ENCODE measurements at regions of chr6 and their contacts with region 1.

Region 1: DNA sequence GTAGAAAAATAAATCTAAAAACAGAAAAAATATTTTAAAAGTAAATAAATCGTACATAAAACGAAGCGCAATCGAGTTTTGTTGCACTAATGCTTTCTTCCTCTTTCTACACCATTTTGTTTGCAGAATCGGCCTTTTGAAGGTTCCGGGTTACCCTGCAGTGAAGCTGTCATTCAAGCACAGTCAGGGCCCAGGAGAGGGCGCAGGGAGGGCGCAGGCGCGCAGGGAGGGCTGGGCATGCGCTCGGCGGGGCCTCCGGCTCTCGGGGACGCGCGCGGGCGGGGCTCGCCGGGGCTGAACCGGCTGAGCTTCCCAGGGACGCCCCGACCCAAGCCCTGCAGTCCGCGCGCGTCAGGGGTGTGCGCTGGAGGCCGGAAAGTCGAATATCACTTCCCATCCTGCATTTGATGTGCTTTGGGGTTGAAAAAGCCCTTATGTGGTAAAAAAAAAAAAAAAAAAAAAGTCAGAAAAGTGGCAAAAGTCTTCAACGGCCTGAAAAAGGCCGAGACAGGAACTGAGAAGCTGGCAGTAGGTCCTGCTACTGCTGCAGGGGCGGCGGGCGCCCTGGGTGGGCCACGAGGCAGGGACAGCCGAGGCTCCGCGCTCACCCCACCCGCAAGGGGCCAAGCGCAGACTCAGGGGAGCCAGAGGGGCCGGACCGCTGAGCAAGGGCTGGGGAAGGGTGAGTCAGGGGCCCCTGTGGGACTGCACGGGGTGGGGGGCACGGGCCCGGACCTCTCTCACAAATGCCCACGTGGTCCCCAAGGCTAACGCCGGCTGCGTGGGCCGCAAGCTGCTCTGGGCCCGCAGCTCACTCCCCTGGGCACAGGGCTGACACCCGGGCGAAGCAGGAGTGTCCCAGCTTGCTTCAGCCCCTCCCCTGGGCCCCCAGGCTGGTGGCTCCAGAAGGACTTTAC is 40.5 kb downstream of the THBS2 start:
- DNase-seq: peak; percentile 87
- H3K4me3 Mint-ChIP-seq: peak overlapping the region; percentile 43
- H3K27ac Mint-ChIP-seq: peak overlapping the region; percentile 32
- H3K4me1 Mint-ChIP-seq: peaks cover 7% of the 10 kb centered on the region
- H3K27me3 Mint-ChIP-seq: peaks cover 5% of the 10 kb centered on the region

Region 2: DNA sequence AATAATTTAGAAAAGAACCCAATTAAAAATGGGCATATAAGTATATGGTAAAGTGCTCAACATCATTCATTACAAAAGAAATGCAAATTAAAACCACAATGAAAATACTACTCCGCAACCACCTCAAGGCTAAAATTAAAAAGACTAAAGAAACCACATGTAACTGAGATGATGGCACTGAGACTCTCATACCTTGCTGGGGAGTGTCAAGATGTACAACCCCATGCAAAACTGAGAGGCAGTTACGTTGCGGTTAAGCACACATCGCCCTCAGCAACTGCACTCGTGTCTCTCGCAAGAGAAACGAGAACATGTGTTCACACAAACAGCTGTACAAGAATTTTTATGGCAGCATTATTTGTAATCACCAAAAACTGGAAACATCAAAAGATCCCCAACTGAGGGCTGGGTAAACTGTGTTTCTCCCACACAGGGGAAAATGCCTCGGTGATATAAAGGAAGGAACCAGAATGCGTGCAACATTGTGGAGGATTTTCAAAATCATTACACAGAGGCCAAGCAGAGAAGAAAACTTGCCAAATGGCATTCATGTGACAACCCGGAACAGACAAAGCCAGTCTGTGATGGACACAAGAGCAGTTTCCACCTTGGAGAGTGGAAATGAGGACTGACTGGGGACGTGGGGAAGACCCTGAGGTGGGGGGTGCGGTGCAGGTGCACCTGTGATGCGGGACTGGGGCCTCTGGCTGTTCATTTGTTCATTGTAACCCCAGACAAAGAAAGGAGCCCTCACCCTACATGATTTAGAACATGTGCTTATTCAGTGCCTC is 343.8 kb after region 1 on chr6:
- intact Hi-C with region 1: loop called (anchors 10 kb)
- DNase-seq: peak; percentile 13
- H3K4me3 Mint-ChIP-seq: peak overlapping the region; percentile 4
- H3K27ac Mint-ChIP-seq: peak overlapping the region; percentile 34
- H3K4me1 Mint-ChIP-seq: peaks cover 15% of the 10 kb centered on the region
- H3K27me3 Mint-ChIP-seq: peaks cover 20% of the 10 kb centered on the region

Region 3: GRCh38 chr6:169654598-169655391 is 441.6 kb after region 1 on chr6:
- intact Hi-C with region 1: loop called (anchors 2 kb)
- DNase-seq: peak; percentile 67
- H3K4me3 Mint-ChIP-seq: peak overlapping the region; percentile 87
- H3K27ac Mint-ChIP-seq: peak overlapping the region; percentile 44
- H3K4me1 Mint-ChIP-seq: no peaks in the 10 kb centered on the region
- H3K27me3 Mint-ChIP-seq: no peaks in the 10 kb centered on the region

Region 4: DNA sequence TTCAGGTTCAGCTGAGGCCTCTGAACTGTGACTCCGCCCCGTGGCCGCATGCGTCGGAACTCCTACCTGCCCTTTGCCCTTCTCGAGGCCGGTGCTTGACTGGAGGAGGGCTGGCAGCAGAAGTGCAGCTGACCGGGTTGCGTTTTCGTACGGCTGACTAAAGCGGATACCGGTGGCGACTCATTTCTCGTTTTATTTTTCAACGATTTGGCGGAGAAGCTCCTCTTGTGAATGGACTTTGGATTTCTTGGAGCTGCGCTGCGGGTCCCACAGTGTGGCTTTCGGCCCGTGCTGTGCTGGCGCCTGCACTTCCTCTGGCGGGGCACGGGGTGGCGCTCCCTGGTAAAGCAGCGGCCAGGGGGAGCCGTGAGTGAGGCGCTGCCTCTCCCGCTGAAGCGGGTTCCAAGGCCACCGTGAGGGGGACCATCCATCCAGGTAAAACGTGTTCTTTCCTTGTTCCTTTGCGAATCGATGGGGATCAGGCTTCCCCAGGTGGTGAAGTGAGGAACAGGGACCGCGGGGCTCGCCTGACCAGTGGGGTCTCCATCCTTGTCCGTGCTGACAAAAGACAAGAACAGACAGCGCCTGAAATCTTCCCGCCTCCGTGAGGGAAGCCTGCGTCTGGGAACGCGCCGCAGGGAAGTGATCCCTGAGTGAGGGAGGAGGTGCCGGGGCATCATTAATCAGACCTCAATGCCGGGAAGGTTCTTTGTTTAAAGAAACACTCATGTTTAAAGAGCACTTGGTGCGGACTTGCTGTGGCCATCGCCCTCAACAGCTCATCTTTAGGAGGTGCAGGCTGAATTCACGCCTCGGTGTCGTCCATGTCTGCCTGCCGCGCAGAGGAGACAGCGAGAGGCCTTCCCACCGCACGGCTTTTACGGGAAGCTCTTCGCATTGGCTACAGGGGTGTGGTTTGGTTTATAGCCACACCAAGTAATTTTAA is 577.1 kb after region 1 on chr6:
- intact Hi-C with region 1: loop called (anchors 5 kb)
- DNase-seq: peak; percentile 62
- H3K4me3 Mint-ChIP-seq: peak overlapping the region; percentile 84
- H3K27ac Mint-ChIP-seq: peak overlapping the region; percentile 34
- H3K4me1 Mint-ChIP-seq: peaks cover 22% of the 10 kb centered on the region
- H3K27me3 Mint-ChIP-seq: peaks cover 24% of the 10 kb centered on the region

Region 5: DNA sequence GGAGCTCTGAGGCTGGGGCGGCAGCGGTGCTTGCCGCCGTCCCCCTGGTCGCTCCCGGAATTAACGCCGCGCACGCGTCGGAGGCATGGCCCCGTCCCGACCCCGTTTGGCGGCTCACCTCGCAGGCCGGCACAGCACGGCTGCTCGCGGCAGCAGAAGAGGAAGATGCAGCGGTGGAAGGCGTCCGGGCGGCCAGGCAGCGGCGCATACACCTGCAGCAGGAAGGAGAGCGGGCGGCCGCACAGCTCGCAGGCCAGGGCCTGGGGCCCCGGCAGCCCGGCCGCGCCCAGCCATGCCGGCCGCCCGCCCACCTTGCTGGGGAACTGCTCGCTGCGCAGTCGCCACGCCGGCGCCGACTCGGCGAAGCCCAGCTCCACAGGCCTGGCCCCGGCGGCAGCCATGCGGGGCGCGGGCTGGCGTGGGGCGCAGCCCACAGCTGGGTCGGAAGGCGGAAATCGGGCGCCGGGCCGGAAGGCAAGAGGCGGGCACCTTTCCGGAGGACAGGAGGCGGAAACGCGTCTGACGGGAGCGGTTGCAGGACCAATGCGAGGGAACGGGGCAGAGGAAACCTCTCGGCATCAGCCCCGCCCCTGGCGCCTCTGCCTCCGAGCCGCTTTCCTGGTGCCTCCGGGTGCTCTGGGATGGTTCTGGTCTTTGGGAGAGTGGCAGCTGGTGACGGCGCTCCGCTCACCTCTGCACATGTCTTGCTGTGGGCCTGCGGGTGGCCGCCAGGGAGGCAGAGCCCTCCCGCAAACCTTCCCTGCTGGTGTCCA is 1371.2 kb after region 1 on chr6 and contains the start of gene PDCD2:
- intact Hi-C with region 1: loop called (anchors 2 kb)
- DNase-seq: peak; percentile 91
- H3K4me3 Mint-ChIP-seq: peak within 1 kb of the TSS; percentile 99
- H3K27ac Mint-ChIP-seq: peak within 1 kb of the TSS; percentile 93
- H3K4me1 Mint-ChIP-seq: peaks cover 36% of the 10 kb centered on the region
- H3K27me3 Mint-ChIP-seq: no peaks in the 10 kb centered on the region
- total RNA-seq, gene PDCD2: 142 and 144 TPM in 2 replicates